ENCODE measurements at regions of chr7 and their contacts with region 1.

Region 1: GRCh38 chr7:138865843-138866242 is 67.8 kb upstream of the ATP6V0A4 start:
- DNase-seq: peak; percentile 65
- H3K4me3 Mint-ChIP-seq: no peak overlapping the region
- H3K27ac Mint-ChIP-seq: no peak overlapping the region
- H3K4me1 Mint-ChIP-seq: peaks cover 24% of the 10 kb centered on the region
- H3K27me3 Mint-ChIP-seq: no peaks in the 10 kb centered on the region
- CTCF ChIP-seq: peak; percentile 54

Region 2: DNA sequence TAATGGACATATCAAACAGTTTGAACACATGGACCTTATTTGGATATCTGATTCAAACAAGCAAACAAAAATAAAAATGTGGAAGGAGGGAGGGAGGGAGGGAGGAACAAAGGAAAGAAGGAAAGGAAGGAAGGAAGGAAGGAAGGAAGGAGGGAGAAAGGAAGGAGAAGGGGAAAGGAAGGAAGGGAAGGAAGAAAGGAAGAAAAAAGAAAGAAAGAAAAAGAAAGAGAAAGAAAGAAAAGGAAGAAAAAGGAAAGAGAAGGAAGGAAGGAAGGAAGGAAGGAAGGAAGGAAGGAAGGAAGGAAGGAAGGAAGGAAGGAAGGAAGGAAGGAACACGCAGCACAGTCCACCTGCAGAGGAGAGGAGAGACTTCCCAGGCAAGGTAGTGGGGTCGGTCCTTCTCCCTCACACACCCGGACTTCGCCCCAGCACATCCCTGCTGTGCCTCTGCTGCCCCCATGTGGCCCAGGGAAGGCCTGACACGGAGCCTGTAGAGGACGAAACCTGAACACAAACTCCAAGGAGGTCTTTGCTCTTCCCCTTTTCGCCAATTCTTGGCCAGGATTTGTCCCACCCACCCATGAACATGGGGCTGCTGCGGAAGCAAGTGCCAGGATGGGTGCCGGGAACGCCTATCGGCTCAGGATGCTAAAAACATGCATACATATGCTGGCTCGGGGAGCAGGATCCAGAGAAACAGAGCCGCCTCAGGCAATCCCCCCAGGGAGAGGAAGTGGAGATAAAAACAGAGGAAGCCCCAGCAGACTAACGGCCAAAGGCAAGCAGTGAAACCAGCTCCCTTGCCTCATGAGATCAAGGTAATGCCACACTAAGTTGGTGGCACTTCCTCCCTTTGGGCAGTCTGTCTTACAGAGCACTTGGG is 966.8 kb before region 1 on chr7:
- CTCF ChIA-PET with region 1: no interaction called
- intact Hi-C with region 1: loop called (anchors 10 kb)
- DNase-seq: peak; percentile 86
- H3K4me3 Mint-ChIP-seq: no peak overlapping the region
- H3K27ac Mint-ChIP-seq: no peak overlapping the region
- H3K4me1 Mint-ChIP-seq: peaks cover 8% of the 10 kb centered on the region
- H3K27me3 Mint-ChIP-seq: no peaks in the 10 kb centered on the region
- CTCF ChIP-seq: peak; percentile 83

Region 3: DNA sequence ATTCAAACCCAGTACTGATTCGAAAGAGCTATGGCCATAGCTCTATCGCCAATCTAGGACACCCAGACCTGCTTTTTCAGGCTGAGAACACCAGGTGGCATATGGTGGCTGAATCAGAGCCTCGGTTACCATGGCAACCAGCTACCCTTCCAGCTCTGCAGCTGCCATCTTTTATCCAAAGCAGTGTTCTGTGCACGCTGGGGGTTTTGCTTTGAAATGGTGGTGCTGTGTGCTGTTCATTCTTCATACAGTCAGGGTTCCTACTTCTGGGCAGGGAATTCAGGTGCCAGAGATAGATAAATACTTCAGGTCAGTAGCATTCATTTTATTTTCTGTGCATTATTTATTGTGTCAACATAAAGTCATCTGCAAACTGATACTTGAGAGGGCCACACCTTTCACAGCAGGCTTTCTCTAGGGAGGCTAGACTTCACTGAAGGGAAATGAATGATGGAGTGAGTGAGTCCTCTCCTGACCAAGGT is 704.2 kb before region 1 on chr7:
- CTCF ChIA-PET with region 1: no interaction called
- intact Hi-C with region 1: loop called (anchors 5 kb)
- DNase-seq: peak; percentile 85
- H3K4me3 Mint-ChIP-seq: no peak overlapping the region
- H3K27ac Mint-ChIP-seq: no peak overlapping the region
- H3K4me1 Mint-ChIP-seq: no peaks in the 10 kb centered on the region
- H3K27me3 Mint-ChIP-seq: no peaks in the 10 kb centered on the region
- CTCF ChIP-seq: peak; percentile 71

Region 4: GRCh38 chr7:138663725-138664710 is 201.8 kb before region 1 on chr7:
- CTCF ChIA-PET with region 1: no interaction called
- intact Hi-C with region 1: loop called (anchors 10 kb)
- DNase-seq: peak; percentile 38
- H3K4me3 Mint-ChIP-seq: peak overlapping the region; percentile 86
- H3K27ac Mint-ChIP-seq: peak overlapping the region; percentile 58
- H3K4me1 Mint-ChIP-seq: peaks cover 17% of the 10 kb centered on the region
- H3K27me3 Mint-ChIP-seq: no peaks in the 10 kb centered on the region
- CTCF ChIP-seq: no peak

Region 5: DNA sequence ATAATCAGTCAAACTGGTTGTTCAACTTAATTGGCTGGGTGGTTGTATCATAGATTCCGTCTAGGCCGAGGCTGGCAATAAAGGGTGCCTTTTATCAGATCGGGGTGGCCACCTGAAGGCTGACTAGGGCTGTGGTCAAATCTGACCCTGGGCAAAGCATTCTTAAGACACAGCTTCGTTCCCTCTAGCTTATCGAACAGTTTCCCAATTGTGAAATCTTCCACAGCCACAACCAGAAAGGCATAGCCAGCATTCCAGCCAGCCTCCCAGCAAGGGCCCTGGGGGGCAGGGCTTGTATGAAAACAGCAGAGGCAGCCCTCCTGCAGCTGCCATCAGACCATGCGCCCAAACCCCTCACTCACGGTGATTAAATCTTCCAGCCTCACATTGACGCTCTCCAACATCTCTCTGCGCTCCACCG is 110.5 kb before region 1 on chr7:
- CTCF ChIA-PET with region 1: interaction called, 5 read pairs
- intact Hi-C with region 1: loop called (anchors 2 kb)
- DNase-seq: peak; percentile 84
- H3K4me3 Mint-ChIP-seq: peak overlapping the region; percentile 39
- H3K27ac Mint-ChIP-seq: peak overlapping the region; percentile 82
- H3K4me1 Mint-ChIP-seq: peaks cover 58% of the 10 kb centered on the region
- H3K27me3 Mint-ChIP-seq: no peaks in the 10 kb centered on the region
- CTCF ChIP-seq: no peak

Region 6: GRCh38 chr7:140005754-140006503 is 1140.1 kb after region 1 on chr7:
- CTCF ChIA-PET with region 1: no interaction called
- intact Hi-C with region 1: no loop called
- DNase-seq: peak; percentile 59
- H3K4me3 Mint-ChIP-seq: no peak overlapping the region
- H3K27ac Mint-ChIP-seq: no peak overlapping the region
- H3K4me1 Mint-ChIP-seq: no peaks in the 10 kb centered on the region
- H3K27me3 Mint-ChIP-seq: no peaks in the 10 kb centered on the region
- CTCF ChIP-seq: peak; percentile 38